Gastrocnemius medialis (tissue), 4 donors: ENCODE measurements at regions of chr4 and their contacts with region 1.

Region 1: DNA sequence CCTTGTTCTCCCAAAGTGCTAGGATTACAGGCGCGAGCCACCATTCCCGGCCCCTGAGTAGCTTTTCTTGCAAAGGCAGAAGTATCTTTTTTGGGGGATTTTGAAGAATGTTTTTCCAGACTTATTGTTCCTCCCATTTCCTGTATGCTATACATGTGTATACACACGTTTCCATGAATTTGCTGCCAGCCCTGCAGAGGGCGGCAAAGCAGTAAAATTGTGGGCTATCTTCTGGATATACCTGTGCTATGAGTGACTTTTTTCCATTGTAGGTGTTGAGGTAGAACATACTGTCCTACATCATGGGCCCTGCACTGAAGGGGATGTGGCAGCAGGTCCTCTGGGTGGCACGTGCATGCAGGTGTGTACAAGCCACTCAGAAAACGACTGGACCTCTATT is 16.9 kb upstream of the MED28 start:
- DNase-seq: no peak
- ATAC-seq: no peak
- H3K4me3 ChIP-seq: no peak overlapping the region
- H3K27ac ChIP-seq: no peak overlapping the region
- H3K4me1 ChIP-seq: peaks cover 0 to 6% of the 10 kb centered on the region in 2 donors
- H3K27me3 ChIP-seq: no peaks in the 10 kb centered on the region
- CTCF ChIP-seq: no peak
- POLR2A ChIP-seq: no peak

Region 2: GRCh38 chr4:17647927-17648326 is 50.4 kb after region 1 on chr4:
- in situ Hi-C with region 1: no loop called
- intact Hi-C with region 1: no loop called
- DNase-seq: no peak
- ATAC-seq: no peak
- H3K4me3 ChIP-seq: no peak overlapping the region
- H3K27ac ChIP-seq: no peak overlapping the region
- H3K4me1 ChIP-seq: peaks cover 6% of the 10 kb centered on the region in 2 donors
- H3K27me3 ChIP-seq: no peaks in the 10 kb centered on the region
- CTCF ChIP-seq: peak in 1 of 5 experiments; percentile 18
- POLR2A ChIP-seq: no peak

Region 3: GRCh38 chr4:17664755-17665154 is 67.2 kb after region 1 on chr4:
- in situ Hi-C with region 1: loop called in 1 of 4 experiments (anchors 10 kb)
- intact Hi-C with region 1: no loop called
- DNase-seq: no peak
- ATAC-seq: no peak
- H3K4me3 ChIP-seq: no peak overlapping the region
- H3K27ac ChIP-seq: no peak overlapping the region
- H3K4me1 ChIP-seq: peaks cover 0 to 2% of the 10 kb centered on the region in 2 donors
- H3K27me3 ChIP-seq: no peaks in the 10 kb centered on the region
- CTCF ChIP-seq: no peak
- POLR2A ChIP-seq: no peak